Colonic mucosa (tissue), 4 donors: ENCODE measurements at regions of chr13 and their contacts with region 1.

Region 1: DNA sequence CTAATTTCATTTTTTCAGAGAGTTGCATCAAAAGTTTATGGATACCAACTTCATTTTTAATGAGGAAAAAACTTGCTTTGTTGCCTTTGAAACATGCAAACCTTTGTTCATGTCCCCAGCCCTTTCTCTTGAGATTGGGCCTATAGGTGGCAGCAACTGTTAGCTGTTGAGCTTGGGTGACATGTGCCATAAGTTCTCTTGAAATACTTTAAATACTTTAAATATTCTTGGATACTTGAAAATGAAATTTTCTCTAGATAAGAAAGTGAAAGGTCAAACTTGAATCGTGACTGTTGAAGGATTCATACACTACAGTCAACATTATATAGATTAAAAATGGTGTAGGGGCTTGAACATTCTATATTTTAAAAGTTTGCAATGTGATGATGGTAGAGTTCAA is 294.9 kb downstream of the NDFIP2 start:
- DNase-seq: peak; percentile 61
- H3K4me3 ChIP-seq: no peak overlapping the region
- H3K27ac ChIP-seq: peak overlapping the region; percentile 21
- H3K4me1 ChIP-seq: no peaks in the 10 kb centered on the region
- H3K27me3 ChIP-seq: no peaks in the 10 kb centered on the region
- CTCF ChIP-seq: peak; percentile 51

Region 2: GRCh38 chr13:80363890-80364503 is 588.2 kb after region 1 on chr13:
- intact Hi-C with region 1: loop called (anchors 5 kb)
- DNase-seq: no peak
- H3K4me3 ChIP-seq: no peak overlapping the region
- H3K27ac ChIP-seq: no peak overlapping the region
- H3K4me1 ChIP-seq: peaks cover 5% of the 10 kb centered on the region
- H3K27me3 ChIP-seq: no peaks in the 10 kb centered on the region
- CTCF ChIP-seq: peak; percentile 79